Mammary epithelial cell (primary cell): ENCODE measurements at regions of chr7 and their contacts with region 1.

Region 1: DNA sequence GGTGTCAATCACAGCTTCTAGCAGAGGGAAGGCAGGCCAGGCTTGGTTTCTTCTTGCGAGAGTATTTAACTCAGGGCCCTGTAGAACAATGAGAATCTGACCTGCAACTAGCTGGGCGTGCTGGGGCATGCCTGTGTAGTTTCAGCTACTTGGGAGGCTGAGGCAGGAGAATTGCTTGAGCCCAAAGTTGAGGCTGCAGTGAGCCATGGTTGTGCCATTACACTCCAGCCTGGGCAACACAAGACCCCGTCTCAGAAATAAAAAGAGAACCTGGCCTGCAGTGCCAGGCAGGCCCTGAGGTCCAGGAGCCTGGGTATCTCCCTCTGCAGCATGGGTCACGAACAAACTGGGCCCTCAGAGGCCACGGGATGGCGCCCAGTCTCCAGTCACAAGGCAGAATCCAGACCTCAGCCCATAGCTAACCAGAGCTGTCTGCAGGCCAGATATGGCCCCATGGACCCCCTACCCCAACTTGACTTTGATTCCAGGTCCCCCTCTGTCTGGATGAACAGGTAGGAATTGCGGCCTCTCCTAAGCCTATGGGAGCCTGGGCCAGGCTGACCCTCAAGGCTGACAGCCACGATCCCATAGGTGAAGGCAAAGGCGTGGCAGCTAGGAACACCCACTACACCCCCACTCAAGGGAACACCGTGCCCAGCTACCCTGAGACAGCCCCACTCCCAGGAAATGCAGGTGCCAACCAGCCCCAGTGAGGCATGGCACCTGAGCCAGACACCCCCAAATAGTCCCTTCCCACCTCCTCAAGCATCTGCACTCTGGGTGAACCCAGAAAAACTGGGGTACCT is 102.7 kb upstream of the TNRC18 start:
- DNase-seq: peak; percentile 76
- H3K4me3 ChIP-seq: peak overlapping the region in 1 of 3 experiments; percentile 1
- H3K27ac ChIP-seq: peak overlapping the region; percentile 20
- H3K4me1 ChIP-seq: peaks cover 19% of the 10 kb centered on the region
- H3K27me3 ChIP-seq: no peaks in the 10 kb centered on the region
- CTCF ChIP-seq: peak in 1 of 2 donors; percentile 35

Region 2: GRCh38 chr7:5445981-5446594 is 80.2 kb before region 1 on chr7:
- CTCF ChIA-PET with region 1: no interaction called
- dilution Hi-C with region 1: no loop called
- in situ Hi-C with region 1: no loop called
- intact Hi-C with region 1: no loop called
- DNase-seq: no peak
- H3K4me3 ChIP-seq: no peak overlapping the region
- H3K27ac ChIP-seq: no peak overlapping the region
- H3K4me1 ChIP-seq: peaks cover 8% of the 10 kb centered on the region
- H3K27me3 ChIP-seq: no peaks in the 10 kb centered on the region
- CTCF ChIP-seq: no peak

Region 3: GRCh38 chr7:5494683-5495561 is 31.4 kb before region 1 on chr7:
- CTCF ChIA-PET with region 1: no interaction called
- dilution Hi-C with region 1: no loop called
- in situ Hi-C with region 1: no loop called
- intact Hi-C with region 1: no loop called
- DNase-seq: peak; percentile 76
- H3K4me3 ChIP-seq: peak overlapping the region in 2 of 3 experiments; percentile 15 to 23
- H3K27ac ChIP-seq: peak overlapping the region; percentile 16
- H3K4me1 ChIP-seq: peaks cover 21% of the 10 kb centered on the region
- H3K27me3 ChIP-seq: no peaks in the 10 kb centered on the region
- CTCF ChIP-seq: peak; percentile 91 to 96

Region 4: GRCh38 chr7:5549096-5549763 is 22.9 kb after region 1 on chr7:
- CTCF ChIA-PET with region 1: no interaction called
- dilution Hi-C with region 1: no loop called
- in situ Hi-C with region 1: no loop called
- intact Hi-C with region 1: loop called (anchors 1 kb)
- DNase-seq: peak; percentile 93
- H3K4me3 ChIP-seq: no peak overlapping the region
- H3K27ac ChIP-seq: peak overlapping the region; percentile 76
- H3K4me1 ChIP-seq: peaks cover 12% of the 10 kb centered on the region
- H3K27me3 ChIP-seq: no peaks in the 10 kb centered on the region
- CTCF ChIP-seq: peak in 1 of 2 donors; percentile 19

Region 5: DNA sequence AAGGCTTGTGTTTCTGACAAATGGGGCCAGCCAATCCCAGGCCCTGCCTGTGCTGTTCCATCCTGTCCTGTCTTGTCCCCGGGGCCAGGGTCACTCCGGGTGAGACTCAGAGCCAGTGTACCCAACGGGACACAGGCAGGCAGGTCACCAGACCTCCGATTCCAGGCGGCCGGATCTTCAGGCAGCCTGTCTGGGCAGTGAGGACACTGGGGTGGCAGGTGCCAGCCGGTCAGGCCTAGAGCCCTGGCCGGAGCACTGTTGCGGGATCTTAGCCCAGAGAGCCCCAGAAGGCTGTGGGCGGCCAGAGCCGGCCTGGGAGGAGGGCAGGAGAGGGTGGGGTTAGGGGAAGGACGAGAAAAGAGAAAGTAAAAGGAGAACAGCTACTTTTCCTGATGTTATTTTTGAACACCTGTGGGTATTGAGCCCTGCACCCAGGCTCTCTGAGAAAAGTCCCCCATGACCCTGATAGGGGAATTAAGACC is 31.7 kb after region 1 on chr7:
- CTCF ChIA-PET with region 1: no interaction called
- dilution Hi-C with region 1: no loop called
- in situ Hi-C with region 1: no loop called
- intact Hi-C with region 1: loop called (anchors 1 kb)
- DNase-seq: peak; percentile 41
- H3K4me3 ChIP-seq: no peak overlapping the region
- H3K27ac ChIP-seq: peak overlapping the region; percentile 19
- H3K4me1 ChIP-seq: peaks cover 51% of the 10 kb centered on the region
- H3K27me3 ChIP-seq: no peaks in the 10 kb centered on the region
- CTCF ChIP-seq: no peak